ENCODE measurements at regions of chrX and their contacts with region 1.

Region 1: DNA sequence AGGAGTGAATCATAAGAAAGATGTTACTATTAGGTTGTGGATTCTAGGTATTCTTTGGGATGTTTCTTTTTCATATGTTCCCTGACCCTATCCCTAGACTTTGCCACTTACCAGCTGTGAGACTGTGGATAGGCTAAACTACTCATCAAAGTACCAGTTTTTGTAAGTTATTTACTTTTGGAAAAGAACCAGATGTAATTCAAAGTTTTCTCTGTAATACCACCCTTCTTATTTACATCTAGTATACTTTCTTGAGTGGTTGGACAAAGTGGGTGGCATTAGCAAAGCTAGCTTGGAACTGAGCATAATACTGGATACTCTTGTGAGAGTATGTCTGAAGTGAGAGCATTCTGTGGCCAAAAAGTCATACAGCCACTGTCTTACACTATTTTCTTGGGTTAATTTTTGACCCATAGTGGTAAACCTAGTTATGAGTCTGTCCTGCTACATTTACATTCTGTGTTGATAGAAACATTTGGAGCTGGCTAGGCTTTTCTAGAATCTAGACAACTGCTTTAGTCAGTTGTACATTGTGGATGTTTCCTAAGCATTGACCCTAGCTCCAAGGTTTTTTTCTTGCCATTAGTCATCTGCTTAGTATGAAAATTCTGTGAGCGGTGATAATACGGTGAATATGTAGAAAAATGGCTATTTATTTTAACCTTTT is 41.7 kb downstream of the KDM6A start:
- DNase-seq: no peak
- H3K4me3 Mint-ChIP-seq: peak overlapping the region; percentile 57
- H3K27ac Mint-ChIP-seq: peak overlapping the region; percentile 73
- H3K4me1 Mint-ChIP-seq: peaks cover 35% of the 10 kb centered on the region
- H3K27me3 Mint-ChIP-seq: no peaks in the 10 kb centered on the region
- CTCF ChIP-seq: no peak

Region 2: GRCh38 chrX:44415639-44416386 is 498.9 kb before region 1 on chrX:
- CTCF ChIA-PET with region 1: no interaction called
- intact Hi-C with region 1: no loop called
- DNase-seq: no peak
- H3K4me3 Mint-ChIP-seq: no peak overlapping the region
- H3K27ac Mint-ChIP-seq: no peak overlapping the region
- H3K4me1 Mint-ChIP-seq: no peaks in the 10 kb centered on the region
- H3K27me3 Mint-ChIP-seq: no peaks in the 10 kb centered on the region
- CTCF ChIP-seq: no peak

Region 3: DNA sequence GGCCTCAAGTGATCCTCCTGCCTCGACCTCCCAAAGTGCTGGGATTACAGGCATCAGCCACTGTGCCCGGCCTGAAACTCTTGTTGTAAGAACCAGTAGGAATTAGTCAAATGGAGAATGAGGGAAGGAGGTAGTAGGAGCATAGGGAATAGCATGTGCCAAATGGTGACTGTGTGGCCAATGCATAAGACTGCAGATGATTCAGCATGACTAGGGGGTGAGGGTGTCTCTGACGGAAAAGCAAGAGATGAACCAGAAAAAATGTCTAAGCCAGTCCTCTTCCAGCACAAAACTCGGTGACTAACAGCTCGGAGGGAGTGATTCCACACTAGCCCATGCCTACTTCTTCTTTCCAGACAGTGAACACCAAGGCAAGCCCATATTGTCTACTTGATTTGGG is 129.0 kb before region 1 on chrX:
- CTCF ChIA-PET with region 1: no interaction called
- intact Hi-C with region 1: no loop called
- DNase-seq: no peak
- H3K4me3 Mint-ChIP-seq: no peak overlapping the region
- H3K27ac Mint-ChIP-seq: no peak overlapping the region
- H3K4me1 Mint-ChIP-seq: no peaks in the 10 kb centered on the region
- H3K27me3 Mint-ChIP-seq: no peaks in the 10 kb centered on the region
- CTCF ChIP-seq: no peak

Region 4: DNA sequence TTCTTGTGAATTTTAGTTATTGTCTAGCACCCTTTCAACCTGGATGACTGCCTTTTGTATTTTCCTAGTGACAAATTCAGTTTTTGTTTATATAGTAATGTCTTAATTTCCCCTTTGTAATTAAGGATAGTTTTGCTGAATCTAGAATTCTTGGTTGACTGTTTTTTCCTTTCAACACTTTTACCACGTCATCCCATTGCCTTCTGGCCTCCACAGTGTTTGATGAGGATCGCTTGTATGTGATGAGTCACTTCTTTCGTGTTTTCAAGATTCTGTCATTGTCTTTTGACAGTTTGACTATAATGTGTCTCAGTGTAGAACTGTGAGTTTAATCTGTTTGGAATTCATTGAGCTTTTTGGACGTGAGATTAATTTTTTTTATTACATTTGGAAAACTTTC is 11.6 kb before region 1 on chrX:
- CTCF ChIA-PET with region 1: interaction called, 4 read pairs
- intact Hi-C with region 1: loop called (anchors 1 kb)
- DNase-seq: no peak
- H3K4me3 Mint-ChIP-seq: no peak overlapping the region
- H3K27ac Mint-ChIP-seq: peak overlapping the region; percentile 56
- H3K4me1 Mint-ChIP-seq: peaks cover 63% of the 10 kb centered on the region
- H3K27me3 Mint-ChIP-seq: no peaks in the 10 kb centered on the region
- CTCF ChIP-seq: no peak

Region 5: GRCh38 chrX:45007598-45007997 is 92.9 kb after region 1 on chrX:
- CTCF ChIA-PET with region 1: no interaction called
- intact Hi-C with region 1: no loop called
- DNase-seq: no peak
- H3K4me3 Mint-ChIP-seq: no peak overlapping the region
- H3K27ac Mint-ChIP-seq: peak overlapping the region; percentile 40
- H3K4me1 Mint-ChIP-seq: peaks cover 20% of the 10 kb centered on the region
- H3K27me3 Mint-ChIP-seq: no peaks in the 10 kb centered on the region
- CTCF ChIP-seq: no peak